Activated B cell treated with CpG ODN at 0.5 μM for 24 hours (primary cell): ENCODE measurements at regions of chr22 and their contacts with region 1.

Region 1: GRCh38 chr22:31230871-31231621 is 18.9 kb downstream of the LIMK2 start:
- DNase-seq: no peak
- ATAC-seq: peak; percentile 52
- H3K4me3 Mint-ChIP-seq: no peak overlapping the region
- H3K27ac Mint-ChIP-seq: no peak overlapping the region
- H3K4me1 Mint-ChIP-seq: peaks cover 23% of the 10 kb centered on the region
- H3K27me3 Mint-ChIP-seq: no peaks in the 10 kb centered on the region
- CTCF ChIP-seq: no peak

Region 2: GRCh38 chr22:30763815-30764686 is 467.0 kb before region 1 on chr22:
- CTCF ChIA-PET with region 1: no interaction called
- POLR2A ChIA-PET with region 1: no interaction called
- intact Hi-C with region 1: loop called (anchors 10 kb)
- DNase-seq: no peak
- ATAC-seq: no peak
- H3K4me3 Mint-ChIP-seq: no peak overlapping the region
- H3K27ac Mint-ChIP-seq: no peak overlapping the region
- H3K4me1 Mint-ChIP-seq: no peaks in the 10 kb centered on the region
- H3K27me3 Mint-ChIP-seq: peaks cover 3% of the 10 kb centered on the region
- CTCF ChIP-seq: no peak

Region 3: DNA sequence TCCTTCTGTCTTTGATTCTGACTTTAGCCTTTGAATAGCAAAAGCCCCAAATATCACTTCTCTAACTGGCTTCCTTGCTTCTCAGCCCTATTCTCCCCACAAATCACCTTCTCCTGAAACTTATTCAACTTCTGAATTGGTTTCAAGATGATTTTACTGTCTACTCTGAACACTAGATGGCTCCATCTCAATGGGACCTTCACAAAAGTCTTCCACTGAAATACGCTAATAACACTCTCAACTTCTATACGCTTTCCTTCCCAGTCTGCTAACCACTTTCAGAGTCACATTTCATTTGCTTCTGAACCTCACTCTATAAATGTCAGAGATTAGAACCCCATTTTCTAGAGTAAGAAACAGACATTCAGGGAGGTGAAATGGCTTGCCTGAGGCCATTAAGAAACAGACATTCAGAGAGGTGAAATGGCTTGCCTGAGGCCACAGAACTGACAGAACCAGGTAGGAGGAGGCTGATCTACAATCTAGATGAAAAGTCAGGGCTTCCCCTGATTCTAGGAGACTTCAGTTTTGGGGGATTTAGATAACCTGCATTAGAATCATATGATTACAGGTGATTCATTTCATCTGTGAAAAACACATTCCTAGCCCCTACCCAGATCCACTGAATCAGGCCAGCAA is 283.1 kb before region 1 on chr22:
- CTCF ChIA-PET with region 1: interaction called, 3 read pairs
- POLR2A ChIA-PET with region 1: no interaction called
- intact Hi-C with region 1: loop called (anchors 2 kb)
- DNase-seq: no peak
- ATAC-seq: no peak
- H3K4me3 Mint-ChIP-seq: no peak overlapping the region
- H3K27ac Mint-ChIP-seq: no peak overlapping the region
- H3K4me1 Mint-ChIP-seq: no peaks in the 10 kb centered on the region
- H3K27me3 Mint-ChIP-seq: no peaks in the 10 kb centered on the region
- CTCF ChIP-seq: no peak

Region 4: GRCh38 chr22:31089160-31090100 is 141.6 kb before region 1 on chr22:
- CTCF ChIA-PET with region 1: interaction called, 3 read pairs
- POLR2A ChIA-PET with region 1: interaction called, 3 read pairs
- intact Hi-C with region 1: loop called (anchors 1 kb)
- DNase-seq: peak; percentile 36
- ATAC-seq: peak; percentile 14
- H3K4me3 Mint-ChIP-seq: no peak overlapping the region
- H3K27ac Mint-ChIP-seq: peak overlapping the region; percentile 54
- H3K4me1 Mint-ChIP-seq: peaks cover 27% of the 10 kb centered on the region
- H3K27me3 Mint-ChIP-seq: no peaks in the 10 kb centered on the region
- CTCF ChIP-seq: no peak

Region 5: DNA sequence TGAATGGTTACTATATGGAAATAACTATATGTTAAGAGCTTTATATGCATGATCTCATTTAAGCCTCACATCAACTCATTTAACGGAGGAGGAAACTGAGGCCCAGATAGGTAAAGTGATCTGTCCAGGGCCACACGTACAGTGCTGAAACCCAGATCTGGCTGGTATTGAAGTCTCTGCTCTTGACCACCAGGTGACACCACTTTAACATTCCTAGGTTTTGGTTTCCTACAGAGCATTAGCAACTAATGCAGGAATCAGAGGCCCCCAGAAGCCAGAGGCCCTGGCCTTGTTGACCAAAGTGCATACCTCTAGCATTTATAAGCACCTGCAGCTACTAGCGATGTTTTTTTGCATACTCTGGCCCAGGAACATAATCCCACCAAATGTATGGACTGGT is 31.9 kb before region 1 on chr22:
- CTCF ChIA-PET with region 1: no interaction called
- POLR2A ChIA-PET with region 1: no interaction called
- intact Hi-C with region 1: loop called (anchors 1 kb)
- DNase-seq: no peak
- ATAC-seq: no peak
- H3K4me3 Mint-ChIP-seq: no peak overlapping the region
- H3K27ac Mint-ChIP-seq: no peak overlapping the region
- H3K4me1 Mint-ChIP-seq: no peaks in the 10 kb centered on the region
- H3K27me3 Mint-ChIP-seq: no peaks in the 10 kb centered on the region
- CTCF ChIP-seq: no peak